GM12878 (cell line): ENCODE measurements at regions of chr6 and their contacts with region 1.

Region 1: GRCh38 chr6:111605100-111605751 is 452 bp downstream of the TRAF3IP2 start:
- DNase-seq: no peak
- ATAC-seq: peak; percentile 65
- H3K4me3 ChIP-seq: peak overlapping the region; percentile 74
- H3K27ac ChIP-seq: peak overlapping the region; percentile 87
- H3K4me1 ChIP-seq: peaks cover 11% of the 10 kb centered on the region; the same call in 1 of the 2 replicates
- H3K27me3 ChIP-seq: no peaks in the 10 kb centered on the region
- CTCF ChIP-seq: no peak
- EP300 ChIP-seq: no peak
- POLR2A ChIP-seq: no peak
- RAD21 ChIP-seq: no peak

Region 2: GRCh38 chr6:111276338-111277119 is 328.7 kb before region 1 on chr6:
- CTCF ChIA-PET with region 1: no interaction called
- POLR2A ChIA-PET with region 1: no interaction called
- RAD21 ChIA-PET with region 1: no interaction called
- SMC1A ChIA-PET with region 1: no interaction called
- in situ Hi-C with region 1: no loop called
- intact Hi-C with region 1: no loop called
- DNase-seq: no peak
- ATAC-seq: no peak
- H3K4me3 ChIP-seq: no peak overlapping the region
- H3K27ac ChIP-seq: no peak overlapping the region
- H3K4me1 ChIP-seq: no peaks in the 10 kb centered on the region
- H3K27me3 ChIP-seq: no peaks in the 10 kb centered on the region
- CTCF ChIP-seq: no peak
- EP300 ChIP-seq: no peak
- POLR2A ChIP-seq: no peak
- RAD21 ChIP-seq: no peak

Region 3: GRCh38 chr6:111585241-111585973 is 19.8 kb before region 1 on chr6:
- CTCF ChIA-PET with region 1: interaction called, 3 read pairs
- POLR2A ChIA-PET with region 1: interaction called, 4 read pairs
- RAD21 ChIA-PET with region 1: interaction called, 5 read pairs
- SMC1A ChIA-PET with region 1: interaction called, 17 read pairs
- in situ Hi-C with region 1: no loop called
- intact Hi-C with region 1: no loop called
- DNase-seq: no peak
- ATAC-seq: no peak
- H3K4me3 ChIP-seq: no peak overlapping the region
- H3K27ac ChIP-seq: no peak overlapping the region
- H3K4me1 ChIP-seq: no peaks in the 10 kb centered on the region
- H3K27me3 ChIP-seq: no peaks in the 10 kb centered on the region
- CTCF ChIP-seq: no peak
- EP300 ChIP-seq: no peak
- POLR2A ChIP-seq: no peak
- RAD21 ChIP-seq: no peak

Region 4: GRCh38 chr6:111642463-111643158 is 37.4 kb after region 1 on chr6:
- CTCF ChIA-PET with region 1: interaction called, 5 read pairs
- POLR2A ChIA-PET with region 1: no interaction called
- RAD21 ChIA-PET with region 1: no interaction called
- SMC1A ChIA-PET with region 1: interaction called, 3 read pairs
- in situ Hi-C with region 1: no loop called
- intact Hi-C with region 1: loop called (anchors 1 kb)
- DNase-seq: peak; percentile 21
- ATAC-seq: peak; percentile 95
- H3K4me3 ChIP-seq: no peak overlapping the region
- H3K27ac ChIP-seq: no peak overlapping the region
- H3K4me1 ChIP-seq: no peaks in the 10 kb centered on the region
- H3K27me3 ChIP-seq: no peaks in the 10 kb centered on the region
- CTCF ChIP-seq: peak; percentile 57 to 77 (median 65)
- EP300 ChIP-seq: no peak
- POLR2A ChIP-seq: no peak
- RAD21 ChIP-seq: peak; percentile 75